GM12878 (cell line): ENCODE measurements at regions of chr3 and their contacts with region 1.

Region 1: DNA sequence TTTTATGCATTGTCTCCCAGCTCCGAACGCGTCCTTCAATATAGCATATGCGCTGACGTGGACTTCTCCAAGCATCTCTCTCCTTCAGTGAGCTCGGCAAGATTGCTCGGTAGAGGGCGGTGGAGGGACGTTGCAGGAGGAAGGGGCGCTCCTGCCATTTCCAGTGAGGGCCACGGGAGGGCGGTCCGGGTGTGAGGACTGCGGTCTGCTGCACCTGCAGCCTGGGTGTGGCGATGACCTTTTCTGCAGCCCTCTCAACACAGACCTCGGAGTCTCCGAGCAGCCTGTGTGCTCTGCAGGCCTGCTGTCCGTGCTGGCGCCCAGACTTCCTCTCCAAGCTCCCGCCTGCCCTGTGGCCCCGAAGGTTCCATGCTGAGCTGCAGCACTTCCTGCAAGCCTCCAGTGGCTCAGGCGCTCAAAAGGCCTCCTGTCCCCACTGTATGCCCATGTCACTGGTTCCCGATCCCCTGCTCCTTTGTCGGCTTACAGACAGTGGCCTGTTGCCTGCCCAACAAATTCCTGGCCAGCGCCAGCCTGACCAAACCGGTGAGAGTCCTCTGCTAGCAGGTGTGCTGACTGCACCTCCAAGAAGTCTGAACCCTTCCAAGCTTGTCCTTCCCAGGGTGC is 8.9 kb upstream of the RTP3 start:
- DNase-seq: peak; percentile 56
- ATAC-seq: peak; percentile 99
- H3K4me3 ChIP-seq: no peak overlapping the region
- H3K27ac ChIP-seq: no peak overlapping the region
- H3K4me1 ChIP-seq: peaks cover 5% of the 10 kb centered on the region
- H3K27me3 ChIP-seq: peaks cover 0 to 2% of the 10 kb centered on the region in 2 experiments; a peak in 1 of 4 replicates
- CTCF ChIP-seq: peak; percentile 100; a peak in 5 of 6 replicates
- EP300 ChIP-seq: peak in 1 of 2 experiments; percentile 60; a peak in 1 of 4 replicates
- POLR2A ChIP-seq: no peak
- RAD21 ChIP-seq: peak; percentile 100

Region 2: GRCh38 chr3:46469680-46470357 is 19.0 kb before region 1 on chr3:
- CTCF ChIA-PET with region 1: interaction called, 19 read pairs
- POLR2A ChIA-PET with region 1: no interaction called
- RAD21 ChIA-PET with region 1: interaction called, 5 read pairs
- SMC1A ChIA-PET with region 1: interaction called, 10 read pairs
- in situ Hi-C with region 1: no loop called
- intact Hi-C with region 1: no loop called
- DNase-seq: no peak
- ATAC-seq: no peak
- H3K4me3 ChIP-seq: no peak overlapping the region
- H3K27ac ChIP-seq: no peak overlapping the region
- H3K4me1 ChIP-seq: no peaks in the 10 kb centered on the region
- H3K27me3 ChIP-seq: peaks cover 1 to 5% of the 10 kb centered on the region in 2 experiments; a peak in 2 of 4 replicates
- CTCF ChIP-seq: no peak
- EP300 ChIP-seq: no peak
- POLR2A ChIP-seq: no peak
- RAD21 ChIP-seq: no peak

Region 3: DNA sequence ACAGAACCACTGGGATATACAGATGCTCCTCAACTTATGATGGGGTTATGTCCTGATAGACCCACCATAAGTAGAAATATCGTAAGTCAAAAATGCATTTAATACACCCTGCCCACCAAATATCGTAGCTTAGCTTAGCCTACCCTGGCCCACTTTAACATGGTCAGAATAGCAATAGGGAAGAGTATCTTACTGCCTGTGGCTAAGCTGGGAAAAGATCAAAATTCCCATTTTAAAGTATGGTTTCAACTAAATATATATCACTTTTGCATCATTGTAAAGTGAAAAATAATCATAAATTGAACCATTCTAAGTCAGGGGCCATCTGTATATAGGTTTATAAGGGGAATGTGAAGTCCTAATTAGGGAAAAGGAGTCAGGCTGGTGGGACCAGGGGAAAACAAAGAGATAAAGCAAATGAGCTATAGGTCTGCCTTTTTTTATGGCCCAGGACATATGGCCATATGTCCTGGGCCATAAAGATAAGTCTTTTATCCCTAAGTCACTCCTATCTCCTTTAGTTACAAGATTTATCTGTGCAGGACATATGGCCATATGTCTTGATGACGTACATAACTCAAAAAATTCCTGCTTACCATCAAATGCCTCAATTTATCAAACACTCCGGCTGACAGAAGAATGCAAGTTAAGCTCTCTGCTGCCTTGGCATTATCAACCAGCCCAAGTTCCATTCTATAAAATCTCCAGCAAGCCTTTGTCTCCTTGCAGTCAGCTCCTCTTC is 20.2 kb after region 1 on chr3:
- CTCF ChIA-PET with region 1: interaction called, 16 read pairs
- POLR2A ChIA-PET with region 1: no interaction called
- RAD21 ChIA-PET with region 1: interaction called, 3 read pairs
- SMC1A ChIA-PET with region 1: interaction called, 3 read pairs
- in situ Hi-C with region 1: no loop called
- intact Hi-C with region 1: no loop called
- DNase-seq: no peak
- ATAC-seq: no peak
- H3K4me3 ChIP-seq: no peak overlapping the region
- H3K27ac ChIP-seq: no peak overlapping the region
- H3K4me1 ChIP-seq: no peaks in the 10 kb centered on the region
- H3K27me3 ChIP-seq: no peaks in the 10 kb centered on the region
- CTCF ChIP-seq: no peak
- EP300 ChIP-seq: no peak
- POLR2A ChIP-seq: no peak
- RAD21 ChIP-seq: no peak

Region 4: DNA sequence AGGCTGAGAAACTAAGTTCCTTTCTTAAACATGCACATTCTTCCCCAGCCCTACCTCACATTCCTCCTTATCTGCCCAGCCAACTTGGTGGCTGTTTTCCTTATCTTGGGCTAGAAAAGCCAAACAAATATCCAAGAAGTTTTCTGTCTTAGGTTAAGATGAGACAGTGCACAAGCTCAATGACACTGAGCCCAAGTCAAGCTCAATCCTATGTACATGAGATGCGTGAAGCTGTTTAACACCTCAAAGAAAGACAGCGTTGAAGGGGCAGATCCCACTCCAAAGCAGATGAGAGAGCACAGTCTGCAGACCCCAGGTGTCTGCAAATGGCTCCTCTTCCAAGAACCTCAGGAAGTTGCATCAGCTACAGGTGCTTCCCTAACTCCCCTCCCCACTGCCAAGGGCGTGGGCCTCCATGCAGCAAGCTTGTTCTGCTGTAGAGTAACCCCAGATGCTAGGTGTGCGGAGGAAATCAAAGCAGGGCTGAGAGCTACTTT is 60.6 kb after region 1 on chr3:
- CTCF ChIA-PET with region 1: interaction called, 32 read pairs
- POLR2A ChIA-PET with region 1: no interaction called
- RAD21 ChIA-PET with region 1: no interaction called
- SMC1A ChIA-PET with region 1: interaction called, 3 read pairs
- in situ Hi-C with region 1: no loop called
- intact Hi-C with region 1: no loop called
- DNase-seq: no peak
- ATAC-seq: no peak
- H3K4me3 ChIP-seq: no peak overlapping the region
- H3K27ac ChIP-seq: no peak overlapping the region
- H3K4me1 ChIP-seq: peaks cover 7% of the 10 kb centered on the region; the same call in 1 of the 2 replicates
- H3K27me3 ChIP-seq: no peaks in the 10 kb centered on the region
- CTCF ChIP-seq: no peak
- EP300 ChIP-seq: no peak
- POLR2A ChIP-seq: no peak
- RAD21 ChIP-seq: no peak

Region 5: DNA sequence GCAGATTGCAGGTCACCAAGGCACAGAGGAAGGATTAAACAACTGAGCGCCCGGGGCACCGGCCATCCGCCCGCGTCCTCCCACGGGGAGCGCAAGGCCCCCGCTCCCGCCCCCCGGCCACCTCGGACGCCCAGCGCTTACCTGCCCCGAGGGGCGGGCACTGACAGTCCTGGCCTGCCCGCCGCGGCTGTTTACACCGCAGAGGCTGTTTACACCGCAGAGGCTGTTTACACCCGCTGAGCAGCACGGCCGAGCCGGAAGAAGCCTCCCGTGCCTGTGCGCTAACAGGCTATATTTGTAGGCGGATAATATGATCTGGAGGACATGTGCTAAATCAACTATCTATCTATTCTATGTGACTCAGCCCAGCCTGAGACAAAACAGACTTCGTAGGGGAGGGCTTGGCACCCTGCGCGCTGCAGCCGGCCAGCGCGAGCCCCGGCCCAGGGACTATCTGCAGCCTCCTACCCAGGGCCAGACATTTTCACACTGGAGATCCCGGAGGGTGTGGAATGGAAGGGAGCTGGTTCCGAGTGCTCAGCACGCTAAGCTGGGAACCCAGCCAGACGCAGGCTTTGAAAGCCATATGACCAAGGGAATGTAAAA is 77.3 kb after region 1 on chr3 and contains the start of gene LRRC2:
- CTCF ChIA-PET with region 1: interaction called, 111 read pairs
- POLR2A ChIA-PET with region 1: interaction called, 3 read pairs
- RAD21 ChIA-PET with region 1: interaction called, 4 read pairs
- SMC1A ChIA-PET with region 1: interaction called, 11 read pairs
- in situ Hi-C with region 1: no loop called
- intact Hi-C with region 1: no loop called
- DNase-seq: no peak
- ATAC-seq: no peak
- H3K4me3 ChIP-seq: no peak within 1 kb of the TSS
- H3K27ac ChIP-seq: no peak within 1 kb of the TSS
- H3K4me1 ChIP-seq: no peaks in the 10 kb centered on the region
- H3K27me3 ChIP-seq: peaks cover 2 to 6% of the 10 kb centered on the region in 2 experiments
- CTCF ChIP-seq: no peak
- EP300 ChIP-seq: no peak
- POLR2A ChIP-seq: no peak
- RAD21 ChIP-seq: no peak
- polyA plus RNA-seq, gene LRRC2: not detected

Region 6: DNA sequence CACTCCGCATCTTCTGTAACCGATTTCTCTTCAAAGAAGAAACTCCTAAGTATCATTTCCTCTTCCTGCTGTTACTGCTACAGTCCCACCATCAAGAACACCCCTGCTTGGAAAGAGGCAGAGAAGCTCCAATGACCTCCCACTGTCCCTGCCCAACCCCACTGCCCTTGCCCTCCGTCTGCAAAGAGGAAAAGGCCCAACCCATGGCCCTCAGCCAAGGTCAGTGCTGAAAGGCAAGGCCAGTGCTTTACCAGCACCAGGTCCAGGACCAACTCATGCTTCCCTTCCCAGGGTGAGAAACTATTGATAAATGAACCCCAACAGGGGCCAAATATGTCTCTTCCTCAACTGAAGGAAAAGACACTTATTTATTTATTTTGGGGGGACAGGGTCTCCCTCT is 146.0 kb after region 1 on chr3:
- CTCF ChIA-PET with region 1: interaction called, 207 read pairs
- POLR2A ChIA-PET with region 1: no interaction called
- RAD21 ChIA-PET with region 1: interaction called, 66 read pairs
- SMC1A ChIA-PET with region 1: interaction called, 68 read pairs
- in situ Hi-C with region 1: no loop called
- intact Hi-C with region 1: loop called (anchors 1 kb)
- DNase-seq: no peak
- ATAC-seq: no peak
- H3K4me3 ChIP-seq: no peak overlapping the region
- H3K27ac ChIP-seq: no peak overlapping the region
- H3K4me1 ChIP-seq: no peaks in the 10 kb centered on the region
- H3K27me3 ChIP-seq: 0 out of 4 replicates have a peak, but pooled peaks cover 0 to 2% of the 10 kb centered on the region in 2 experiments
- CTCF ChIP-seq: no peak
- EP300 ChIP-seq: no peak
- POLR2A ChIP-seq: no peak
- RAD21 ChIP-seq: no peak

Region 7: DNA sequence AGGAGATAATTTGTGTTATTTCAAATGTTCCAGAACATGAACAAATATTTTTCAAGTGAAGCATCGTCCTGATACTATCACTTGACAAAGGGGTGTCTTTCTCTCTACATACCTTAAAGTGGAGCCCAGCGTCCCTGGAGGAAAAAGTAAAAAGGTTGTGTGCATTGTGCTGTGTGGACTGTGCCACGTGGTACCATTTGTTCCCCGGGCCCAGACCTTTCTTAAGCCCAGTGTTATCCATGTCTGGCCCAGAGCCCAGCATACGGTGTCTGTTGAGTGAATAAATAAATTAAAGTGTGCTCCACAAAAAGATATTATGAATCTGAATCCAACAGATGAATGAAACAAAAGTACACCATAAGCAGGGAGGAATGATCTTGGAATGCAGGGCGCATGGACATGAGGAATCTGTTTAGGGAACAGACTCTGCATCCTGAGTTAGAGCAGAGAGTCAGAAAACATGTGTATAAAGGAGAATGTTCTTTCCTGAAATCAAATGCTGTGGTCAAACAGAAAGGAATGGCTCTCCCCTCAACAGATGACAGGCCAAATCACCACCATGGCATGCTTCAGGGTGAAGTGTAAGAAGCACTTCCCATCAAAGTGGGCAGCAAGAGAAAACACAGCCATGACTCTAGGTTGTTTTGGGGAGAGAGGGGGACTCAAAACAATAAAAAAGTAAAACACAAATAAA is 236.9 kb after region 1 on chr3:
- CTCF ChIA-PET with region 1: no interaction called
- POLR2A ChIA-PET with region 1: no interaction called
- RAD21 ChIA-PET with region 1: no interaction called
- SMC1A ChIA-PET with region 1: no interaction called
- in situ Hi-C with region 1: no loop called
- intact Hi-C with region 1: no loop called
- DNase-seq: no peak
- ATAC-seq: no peak
- H3K4me3 ChIP-seq: no peak overlapping the region
- H3K27ac ChIP-seq: no peak overlapping the region
- H3K4me1 ChIP-seq: peaks cover 3% of the 10 kb centered on the region; the same call in 1 of the 2 replicates
- H3K27me3 ChIP-seq: no peaks in the 10 kb centered on the region
- CTCF ChIP-seq: no peak
- EP300 ChIP-seq: no peak
- POLR2A ChIP-seq: no peak
- RAD21 ChIP-seq: no peak

Region 8: GRCh38 chr3:46895204-46895660 is 406.4 kb after region 1 on chr3:
- CTCF ChIA-PET with region 1: no interaction called
- POLR2A ChIA-PET with region 1: no interaction called
- RAD21 ChIA-PET with region 1: no interaction called
- SMC1A ChIA-PET with region 1: no interaction called
- in situ Hi-C with region 1: no loop called
- intact Hi-C with region 1: no loop called
- DNase-seq: peak; percentile 34
- ATAC-seq: peak; percentile 87
- H3K4me3 ChIP-seq: no peak overlapping the region
- H3K27ac ChIP-seq: no peak overlapping the region
- H3K4me1 ChIP-seq: no peaks in the 10 kb centered on the region; the same call in 1 of the 2 replicates
- H3K27me3 ChIP-seq: peaks cover 2 to 3% of the 10 kb centered on the region in 2 experiments; a peak in 3 of 4 replicates
- CTCF ChIP-seq: peak; percentile 92 to 93 (median 92); a peak in 5 of 6 replicates
- EP300 ChIP-seq: no peak
- POLR2A ChIP-seq: no peak
- RAD21 ChIP-seq: peak; percentile 79